Mammary epithelial cell (primary cell): ENCODE measurements at regions of chr12 and their contacts with region 1.

Region 1: GRCh38 chr12:46546634-46547286 is 174.2 kb upstream of the SLC38A2 start:
- DNase-seq: peak; percentile 71
- H3K4me3 ChIP-seq: no peak overlapping the region
- H3K27ac ChIP-seq: peak overlapping the region; percentile 100
- H3K4me1 ChIP-seq: peaks cover 56% of the 10 kb centered on the region
- H3K27me3 ChIP-seq: no peaks in the 10 kb centered on the region
- CTCF ChIP-seq: no peak

Region 2: DNA sequence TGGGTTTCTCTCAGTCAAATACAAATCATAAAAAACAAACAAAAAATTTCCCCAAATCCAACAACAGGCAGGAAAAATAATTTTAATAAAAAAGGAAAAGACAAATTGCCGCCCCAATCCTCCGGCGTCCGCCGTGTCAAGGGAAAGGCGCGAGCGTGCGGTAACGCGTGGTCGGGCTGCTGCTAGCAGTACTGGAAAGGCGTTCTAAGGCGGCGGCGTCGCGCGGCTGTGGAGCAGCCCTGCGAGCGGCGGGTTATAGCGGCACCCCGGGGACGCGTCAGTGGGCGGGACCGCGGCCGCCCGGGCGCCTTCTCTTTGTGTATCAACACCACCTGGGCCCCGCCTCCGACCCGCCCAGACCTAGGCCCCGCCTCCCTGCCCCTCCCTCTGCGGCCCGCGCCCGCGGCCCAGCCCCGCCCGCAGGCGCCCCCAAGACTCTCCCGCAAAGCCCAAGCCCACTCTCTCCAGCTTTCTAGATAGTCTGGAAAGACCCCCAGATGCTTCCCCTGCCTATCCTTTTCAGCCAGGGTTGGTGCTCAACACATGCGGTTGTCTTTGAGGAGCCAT is 174.1 kb before region 1 on chr12 and contains the start of gene SLC38A2:
- CTCF ChIA-PET with region 1: no interaction called
- dilution Hi-C with region 1: no loop called
- in situ Hi-C with region 1: loop called in 1 of 2 experiments (anchors 25 kb)
- intact Hi-C with region 1: loop called (anchors 1 kb)
- DNase-seq: peak; percentile 91
- H3K4me3 ChIP-seq: peak within 1 kb of the TSS; percentile 91 to 95 (median 92)
- H3K27ac ChIP-seq: peak within 1 kb of the TSS; percentile 98
- H3K4me1 ChIP-seq: peaks cover 27% of the 10 kb centered on the region
- H3K27me3 ChIP-seq: no peaks in the 10 kb centered on the region
- CTCF ChIP-seq: no peak
- total RNA-seq, gene SLC38A2: 774 to 995 TPM

Region 3: DNA sequence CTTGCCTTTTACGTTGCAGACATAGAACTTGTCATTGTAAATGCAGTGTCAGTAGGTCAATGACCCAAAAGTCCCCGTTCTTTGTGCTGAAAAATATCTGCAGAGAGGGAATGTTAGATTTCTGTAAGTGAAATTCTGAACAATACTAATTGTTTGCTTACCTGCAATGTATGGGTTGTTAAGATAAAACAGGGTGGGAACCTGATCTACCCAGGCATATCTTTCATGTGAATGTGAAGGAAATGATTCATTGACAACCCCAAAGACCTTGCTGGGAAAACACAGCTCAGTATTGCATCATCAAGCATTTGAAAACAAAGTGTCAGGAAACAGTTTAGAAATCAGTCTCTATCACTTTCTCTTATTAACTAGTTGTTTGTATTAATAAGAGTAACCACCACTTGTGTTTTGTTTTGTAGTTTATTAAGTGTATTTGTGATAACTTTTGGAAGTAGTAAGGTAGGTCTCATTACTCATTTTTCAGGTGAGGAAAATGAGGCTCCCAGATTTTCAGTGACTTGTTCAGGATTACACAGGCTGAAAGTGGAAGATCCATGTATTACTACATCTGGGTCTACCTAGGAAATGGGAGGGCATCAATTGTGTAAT is 116.3 kb before region 1 on chr12:
- CTCF ChIA-PET with region 1: no interaction called
- dilution Hi-C with region 1: no loop called
- in situ Hi-C with region 1: no loop called
- intact Hi-C with region 1: loop called (anchors 2 kb)
- DNase-seq: peak; percentile 92
- H3K4me3 ChIP-seq: peak overlapping the region in 1 of 3 experiments; percentile 23
- H3K27ac ChIP-seq: peak overlapping the region; percentile 100
- H3K4me1 ChIP-seq: peaks cover 35% of the 10 kb centered on the region
- H3K27me3 ChIP-seq: no peaks in the 10 kb centered on the region
- CTCF ChIP-seq: no peak

Region 4: GRCh38 chr12:46450279-46450748 is 96.4 kb before region 1 on chr12:
- CTCF ChIA-PET with region 1: no interaction called
- dilution Hi-C with region 1: no loop called
- in situ Hi-C with region 1: no loop called
- intact Hi-C with region 1: loop called (anchors 1 kb)
- DNase-seq: peak; percentile 32
- H3K4me3 ChIP-seq: no peak overlapping the region
- H3K27ac ChIP-seq: no peak overlapping the region
- H3K4me1 ChIP-seq: peaks cover 62% of the 10 kb centered on the region
- H3K27me3 ChIP-seq: no peaks in the 10 kb centered on the region
- CTCF ChIP-seq: no peak

Region 5: GRCh38 chr12:46562625-46563228 is 16.0 kb after region 1 on chr12:
- CTCF ChIA-PET with region 1: no interaction called
- dilution Hi-C with region 1: no loop called
- in situ Hi-C with region 1: no loop called
- intact Hi-C with region 1: loop called (anchors 1 kb)
- DNase-seq: peak; percentile 95
- H3K4me3 ChIP-seq: no peak overlapping the region
- H3K27ac ChIP-seq: peak overlapping the region; percentile 96
- H3K4me1 ChIP-seq: peaks cover 41% of the 10 kb centered on the region
- H3K27me3 ChIP-seq: no peaks in the 10 kb centered on the region
- CTCF ChIP-seq: no peak